Right cardiac atrium (tissue), 5 donors: ENCODE measurements at regions of chr7 and their contacts with region 1.

Region 1: GRCh38 chr7:636396-636795 is 90.1 kb upstream of the DNAAF5 start:
- DNase-seq: peak in 1 of 3 donors; percentile 66
- ATAC-seq: peak; percentile 58 to 69
- H3K4me3 ChIP-seq: no peak overlapping the region
- H3K27ac ChIP-seq: no peak overlapping the region
- H3K4me1 ChIP-seq: no peaks in the 10 kb centered on the region
- H3K27me3 ChIP-seq: no peaks in the 10 kb centered on the region

Region 2: GRCh38 chr7:284762-285722 is 351.4 kb before region 1 on chr7:
- intact Hi-C with region 1: no loop called
- DNase-seq: peak in 1 of 3 donors; percentile 32
- ATAC-seq: peak in 1 of 2 donors; percentile 45
- H3K4me3 ChIP-seq: no peak overlapping the region
- H3K27ac ChIP-seq: no peak overlapping the region
- H3K4me1 ChIP-seq: no peaks in the 10 kb centered on the region
- H3K27me3 ChIP-seq: no peaks in the 10 kb centered on the region

Region 3: GRCh38 chr7:322111-322671 is 314.2 kb before region 1 on chr7:
- intact Hi-C with region 1: loop called in 2 of 4 experiments (anchors 10 kb)
- DNase-seq: peak; percentile 60 to 89 (median 88)
- ATAC-seq: peak; percentile 82 to 88
- H3K4me3 ChIP-seq: no peak overlapping the region
- H3K27ac ChIP-seq: no peak overlapping the region
- H3K4me1 ChIP-seq: no peaks in the 10 kb centered on the region
- H3K27me3 ChIP-seq: no peaks in the 10 kb centered on the region

Region 4: GRCh38 chr7:332646-333392 is 303.6 kb before region 1 on chr7:
- intact Hi-C with region 1: loop called in 3 of 4 experiments (anchors 10 kb)
- DNase-seq: peak; percentile 80 to 94 (median 93)
- ATAC-seq: peak; percentile 92 to 93
- H3K4me3 ChIP-seq: peak overlapping the region; percentile 45
- H3K27ac ChIP-seq: peak overlapping the region; percentile 65
- H3K4me1 ChIP-seq: no peaks in the 10 kb centered on the region
- H3K27me3 ChIP-seq: no peaks in the 10 kb centered on the region

Region 5: GRCh38 chr7:574661-575395 is 61.6 kb before region 1 on chr7:
- intact Hi-C with region 1: no loop called
- DNase-seq: peak in 2 of 3 donors; percentile 49 to 64
- ATAC-seq: no peak
- H3K4me3 ChIP-seq: no peak overlapping the region
- H3K27ac ChIP-seq: no peak overlapping the region
- H3K4me1 ChIP-seq: no peaks in the 10 kb centered on the region
- H3K27me3 ChIP-seq: no peaks in the 10 kb centered on the region

Region 6: DNA sequence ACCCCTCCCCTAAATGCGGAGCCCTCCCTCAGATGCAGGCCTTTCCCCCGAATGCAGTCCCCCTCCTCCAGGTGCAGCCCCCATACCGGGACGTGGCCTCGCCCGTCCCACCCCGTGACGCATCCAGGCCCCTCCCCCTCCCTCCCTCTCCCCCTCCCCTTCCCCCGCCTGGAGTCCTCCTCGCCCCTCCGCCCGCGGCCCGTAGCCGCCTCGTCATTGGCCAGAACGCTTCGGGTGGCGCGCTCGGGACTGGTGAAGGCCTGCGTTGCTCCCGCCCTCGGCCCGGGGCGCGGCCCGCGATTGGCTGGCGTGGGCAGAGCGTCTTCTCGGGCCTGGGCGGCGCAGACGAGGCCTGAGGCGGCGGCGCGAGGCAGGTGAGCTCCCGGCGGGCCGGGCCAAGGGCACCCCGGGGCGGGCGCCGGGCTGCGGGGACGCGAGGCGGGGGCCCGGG is 179.9 kb after region 1 on chr7:
- intact Hi-C with region 1: no loop called
- DNase-seq: peak; percentile 98 to 100 (median 99)
- ATAC-seq: peak; percentile 93 to 95
- H3K4me3 ChIP-seq: peak overlapping the region; percentile 95
- H3K27ac ChIP-seq: no peak overlapping the region
- H3K4me1 ChIP-seq: peaks cover 9% of the 10 kb centered on the region
- H3K27me3 ChIP-seq: no peaks in the 10 kb centered on the region